Activated CD4-positive, alpha-beta memory T cell treated with anti-CD3 and anti-CD28 coated beads for 36 hours (primary cell): ENCODE measurements at regions of chr11 and their contacts with region 1.

Region 1: DNA sequence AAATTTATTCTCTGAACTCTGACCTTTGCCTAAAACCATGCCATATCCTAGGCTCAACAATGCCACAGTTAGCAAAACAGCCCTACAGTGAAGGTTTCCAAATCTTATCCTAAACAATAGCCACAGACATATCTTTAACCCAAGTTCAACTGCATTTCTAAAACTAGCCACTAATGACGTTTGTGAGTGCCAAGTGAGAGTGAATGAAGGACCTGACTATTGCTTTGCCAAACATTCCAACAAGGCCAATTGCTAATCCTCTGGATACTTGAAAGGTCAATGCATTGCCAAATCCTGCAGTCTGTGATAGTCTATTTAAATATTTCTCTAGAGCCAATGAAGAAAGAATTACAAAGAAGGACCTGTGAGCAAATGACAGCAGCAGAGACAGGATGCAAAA is 2.5 kb upstream of the OR4C45 start:
- DNase-seq: no peak
- H3K4me3 Mint-ChIP-seq: no peak overlapping the region
- H3K27ac Mint-ChIP-seq: no peak overlapping the region
- H3K4me1 Mint-ChIP-seq: no peaks in the 10 kb centered on the region
- H3K27me3 Mint-ChIP-seq: no peaks in the 10 kb centered on the region

Region 2: DNA sequence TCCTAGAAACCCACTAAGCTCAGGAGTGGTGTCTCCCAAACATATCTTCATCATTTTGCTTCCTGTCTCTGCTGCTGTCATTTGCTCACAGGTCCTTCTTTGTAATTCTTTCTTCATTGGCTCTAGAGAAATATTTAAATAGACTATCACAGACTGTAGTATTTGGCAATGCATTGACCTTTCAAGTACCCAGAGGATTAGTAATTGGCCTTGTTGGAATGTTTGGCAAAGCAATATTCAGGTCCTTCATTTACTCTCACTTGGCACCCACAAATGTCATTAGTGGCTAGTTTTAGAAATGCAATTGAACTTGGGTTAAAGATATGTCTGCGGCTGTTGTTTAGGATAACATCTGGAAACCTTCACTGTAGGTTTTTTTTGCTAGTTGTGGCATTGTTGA is 1675.5 kb before region 1 on chr11:
- CTCF ChIA-PET with region 1: no interaction called
- POLR2A ChIA-PET with region 1: no interaction called
- intact Hi-C with region 1: loop called (anchors 5 kb)
- DNase-seq: no peak
- H3K4me3 Mint-ChIP-seq: no peak overlapping the region
- H3K27ac Mint-ChIP-seq: no peak overlapping the region
- H3K4me1 Mint-ChIP-seq: no peaks in the 10 kb centered on the region
- H3K27me3 Mint-ChIP-seq: no peaks in the 10 kb centered on the region